ENCODE measurements at regions of chr18 and their contacts with region 1.

Region 1: DNA sequence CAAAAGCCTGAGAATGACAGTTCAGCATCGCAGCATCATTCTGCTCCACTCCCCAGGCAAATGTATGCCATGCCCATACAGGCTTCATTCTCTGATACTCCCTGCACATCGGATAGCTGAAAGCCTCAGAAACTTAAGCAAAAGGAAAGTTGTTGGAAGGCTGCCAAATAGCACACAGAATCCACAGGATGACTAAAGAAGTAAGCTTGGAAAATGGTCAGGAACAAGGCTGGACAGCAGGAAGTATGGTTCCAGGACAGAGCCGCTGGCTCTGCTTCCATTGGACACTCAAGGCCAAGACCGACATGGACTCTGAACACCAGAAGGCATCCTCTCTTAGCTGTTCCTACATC is 256.5 kb downstream of the CDH20 start:
- DNase-seq: no peak
- ATAC-seq: no peak

Region 2: DNA sequence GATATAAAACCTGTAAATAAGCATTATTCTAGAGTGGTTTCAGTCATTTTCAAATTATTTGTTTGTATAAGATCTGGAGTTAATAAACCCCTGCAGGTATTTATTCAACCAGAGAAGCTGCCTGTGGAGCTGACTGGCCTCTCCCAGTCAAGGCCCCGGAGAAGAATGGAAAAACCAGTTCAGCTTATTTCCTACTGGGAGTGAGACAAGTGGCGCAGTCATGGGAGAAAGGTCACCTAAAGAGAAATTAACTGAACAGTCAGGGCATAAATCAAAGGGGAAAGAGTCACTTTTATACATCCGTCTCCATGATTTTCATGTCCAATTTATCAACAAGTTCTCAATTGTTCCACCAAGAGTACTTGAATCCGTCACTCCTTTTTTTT is 62.2 kb after region 1 on chr18:
- intact Hi-C with region 1: loop called (anchors 10 kb)
- DNase-seq: no peak
- ATAC-seq: no peak

Measured in Right ventricle myocardium superior (tissue), 1 donor.